Activated naive CD4-positive, alpha-beta T cell treated with anti-CD3 and anti-CD28 coated beads for 36 hours (primary cell): ENCODE measurements at regions of chr7 and their contacts with region 1.

Region 1: GRCh38 chr7:139645572-139646523 is 122.4 kb downstream of the CLEC2L start:
- DNase-seq: peak; percentile 93
- H3K4me3 Mint-ChIP-seq: no peak overlapping the region
- H3K27ac Mint-ChIP-seq: no peak overlapping the region
- H3K4me1 Mint-ChIP-seq: peaks cover 69% of the 10 kb centered on the region
- H3K27me3 Mint-ChIP-seq: no peaks in the 10 kb centered on the region

Region 2: GRCh38 chr7:139602143-139602722 is 43.6 kb before region 1 on chr7:
- CTCF ChIA-PET with region 1: interaction called, 18 read pairs
- intact Hi-C with region 1: loop called (anchors 2 kb)
- DNase-seq: no peak
- H3K4me3 Mint-ChIP-seq: no peak overlapping the region
- H3K27ac Mint-ChIP-seq: no peak overlapping the region
- H3K4me1 Mint-ChIP-seq: no peaks in the 10 kb centered on the region
- H3K27me3 Mint-ChIP-seq: no peaks in the 10 kb centered on the region

Region 3: DNA sequence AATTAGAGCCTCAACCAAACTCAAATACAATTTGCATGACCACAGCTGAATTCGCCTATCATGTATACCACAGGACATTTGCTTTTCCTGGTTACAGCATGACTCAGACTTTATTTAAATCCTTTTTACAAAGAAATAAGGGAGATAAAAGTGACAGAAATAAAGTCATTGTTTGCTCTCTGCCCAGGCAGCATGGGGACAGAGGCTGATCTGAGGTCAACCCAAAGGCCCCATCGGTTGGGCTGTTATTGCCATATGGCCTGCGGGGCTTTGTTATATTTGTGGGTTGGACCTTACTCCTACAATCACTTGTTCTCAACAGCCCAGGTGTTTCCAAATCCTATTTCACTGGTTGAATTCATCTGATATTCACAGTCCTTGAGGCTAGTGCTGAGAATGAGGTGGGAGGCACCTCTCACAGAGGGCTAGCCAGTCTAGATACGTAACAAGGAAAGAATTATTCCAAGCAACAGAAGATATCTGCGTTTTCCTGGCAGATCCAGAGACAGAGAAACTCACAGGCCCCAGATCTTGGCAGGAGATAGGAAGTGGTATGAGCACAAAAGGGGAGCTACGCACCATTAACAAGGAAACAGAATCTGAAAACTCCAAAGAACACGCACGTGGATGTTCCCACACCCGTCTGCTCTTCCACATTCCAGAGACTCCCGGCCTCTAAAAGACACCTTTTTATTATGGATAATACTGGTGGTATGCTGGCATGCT is 14.6 kb after region 1 on chr7:
- CTCF ChIA-PET with region 1: interaction called, 22 read pairs
- intact Hi-C with region 1: no loop called
- DNase-seq: no peak
- H3K4me3 Mint-ChIP-seq: no peak overlapping the region
- H3K27ac Mint-ChIP-seq: no peak overlapping the region
- H3K4me1 Mint-ChIP-seq: peaks cover 14% of the 10 kb centered on the region
- H3K27me3 Mint-ChIP-seq: no peaks in the 10 kb centered on the region

Region 4: DNA sequence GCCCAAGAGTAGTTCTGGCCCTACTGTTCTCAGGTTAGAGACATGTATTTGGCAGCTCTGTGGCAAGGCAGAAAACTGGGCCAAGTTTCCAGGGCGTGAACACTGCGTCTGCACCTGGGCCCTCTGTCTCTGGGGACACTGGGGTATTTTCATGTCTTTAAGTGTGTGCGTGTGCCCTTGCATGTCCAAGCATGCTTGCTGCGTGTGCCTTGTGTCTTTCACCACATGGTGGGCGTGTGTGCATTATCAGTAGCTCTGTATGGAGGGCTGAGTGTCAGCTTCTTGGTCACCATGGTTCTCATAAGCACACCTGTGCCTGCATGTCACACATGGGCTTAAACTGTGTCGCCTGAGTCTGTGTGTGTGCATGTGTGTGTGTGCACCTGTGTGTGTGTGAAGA is 62.7 kb after region 1 on chr7:
- CTCF ChIA-PET with region 1: interaction called, 14 read pairs
- intact Hi-C with region 1: no loop called
- DNase-seq: no peak
- H3K4me3 Mint-ChIP-seq: no peak overlapping the region
- H3K27ac Mint-ChIP-seq: no peak overlapping the region
- H3K4me1 Mint-ChIP-seq: peaks cover 6% of the 10 kb centered on the region
- H3K27me3 Mint-ChIP-seq: no peaks in the 10 kb centered on the region

Region 5: DNA sequence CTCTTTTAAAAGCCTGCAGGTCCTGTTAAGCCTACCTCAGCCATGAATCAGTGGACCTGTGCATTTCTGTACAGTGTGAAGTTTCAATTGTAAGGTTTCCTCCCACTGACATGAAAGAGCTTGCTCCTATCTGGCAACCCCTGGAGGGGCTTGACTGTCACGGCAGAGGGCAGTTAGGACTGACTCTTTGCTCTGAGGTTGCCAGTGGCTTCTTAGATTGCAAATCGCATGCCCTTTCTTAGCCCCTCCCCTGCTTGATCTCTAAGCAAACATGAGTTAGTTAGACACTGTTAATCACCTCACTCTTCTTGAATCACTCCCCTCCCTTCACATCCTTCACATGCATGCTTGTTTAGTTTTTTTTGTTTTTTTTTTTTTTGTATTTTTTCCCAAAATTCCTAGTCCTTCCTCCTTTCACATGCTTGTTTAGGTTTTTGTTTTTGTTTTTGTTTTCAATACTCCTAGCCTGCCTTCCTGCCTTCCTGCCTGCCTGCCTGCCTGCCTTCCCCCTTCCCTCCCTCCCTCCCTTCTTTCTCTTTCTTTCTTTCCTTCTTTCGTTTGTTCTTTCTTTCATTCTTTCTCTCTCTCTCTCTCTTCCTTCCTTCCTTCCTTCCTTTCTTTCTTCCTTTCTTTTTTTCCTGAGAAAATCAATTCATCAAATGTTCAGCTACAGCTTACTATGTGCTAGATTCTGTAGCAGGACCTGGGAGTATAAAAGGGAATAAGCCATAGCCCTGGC is 138.0 kb after region 1 on chr7:
- CTCF ChIA-PET with region 1: interaction called, 17 read pairs
- intact Hi-C with region 1: no loop called
- DNase-seq: no peak
- H3K4me3 Mint-ChIP-seq: no peak overlapping the region
- H3K27ac Mint-ChIP-seq: no peak overlapping the region
- H3K4me1 Mint-ChIP-seq: peaks cover 3% of the 10 kb centered on the region
- H3K27me3 Mint-ChIP-seq: peaks cover 14% of the 10 kb centered on the region

Region 6: GRCh38 chr7:140003913-140004382 is 358.1 kb after region 1 on chr7:
- CTCF ChIA-PET with region 1: interaction called, 120 read pairs
- intact Hi-C with region 1: loop called (anchors 1 kb)
- DNase-seq: peak; percentile 40
- H3K4me3 Mint-ChIP-seq: no peak overlapping the region
- H3K27ac Mint-ChIP-seq: no peak overlapping the region
- H3K4me1 Mint-ChIP-seq: no peaks in the 10 kb centered on the region
- H3K27me3 Mint-ChIP-seq: no peaks in the 10 kb centered on the region

Region 7: GRCh38 chr7:140707132-140707531 is 1061.3 kb after region 1 on chr7:
- CTCF ChIA-PET with region 1: no interaction called
- intact Hi-C with region 1: no loop called
- DNase-seq: no peak
- H3K4me3 Mint-ChIP-seq: no peak overlapping the region
- H3K27ac Mint-ChIP-seq: no peak overlapping the region
- H3K4me1 Mint-ChIP-seq: peaks cover 2% of the 10 kb centered on the region
- H3K27me3 Mint-ChIP-seq: no peaks in the 10 kb centered on the region